BJ (cell line): ENCODE measurements at regions of chr17 and their contacts with region 1.

Region 1: DNA sequence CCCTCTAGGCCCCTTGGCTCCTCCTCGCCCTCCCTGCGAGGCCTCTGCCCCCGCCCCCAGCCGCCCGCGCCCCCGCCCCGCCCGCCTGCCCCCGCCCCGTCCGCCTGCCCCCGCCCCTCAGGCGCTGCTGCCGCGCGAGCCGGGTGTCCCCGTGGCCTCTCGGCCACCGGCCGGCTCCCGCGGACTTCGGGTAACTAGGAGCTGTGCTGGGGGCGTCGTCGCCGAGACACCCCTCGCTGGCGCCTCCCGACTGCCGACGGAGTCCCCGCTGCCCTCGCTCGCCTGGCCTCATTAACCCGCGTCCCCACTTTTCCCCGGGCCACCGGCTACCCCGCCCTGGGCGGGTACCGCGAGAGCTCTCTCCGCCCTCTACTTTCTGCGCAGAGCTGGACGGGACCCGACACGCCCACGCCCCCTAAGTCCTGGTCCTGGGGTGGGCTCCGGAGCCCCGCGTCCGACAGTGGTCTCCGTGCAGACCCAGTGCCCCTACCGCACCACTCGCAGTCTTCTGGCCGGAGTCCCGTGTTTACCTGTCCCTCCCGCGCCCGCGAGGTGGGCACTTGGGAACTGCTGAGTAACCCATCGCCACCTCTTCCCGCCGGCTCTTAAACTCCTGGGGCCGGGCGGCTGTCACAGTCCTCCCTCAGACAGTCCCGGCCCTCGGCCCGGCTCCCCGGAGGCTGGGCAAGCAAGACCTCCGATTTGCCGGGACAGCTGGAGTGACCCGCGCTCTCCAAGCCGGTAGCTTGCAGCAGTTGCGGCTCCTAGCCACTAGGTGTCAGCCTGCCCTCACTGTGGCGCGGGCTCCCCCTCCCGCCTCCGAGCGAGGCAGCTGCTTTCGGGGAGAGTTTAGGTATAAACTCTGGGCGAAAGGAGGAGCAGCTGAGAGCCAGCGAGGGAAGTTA is at the start of gene TLCD1:
- DNase-seq: peak; percentile 65
- H3K4me3 ChIP-seq: peak within 1 kb of the TSS; percentile 71
- H3K27me3 ChIP-seq: no peaks in the 10 kb centered on the region
- CTCF ChIP-seq: peak; percentile 99
- polyA plus RNA-seq, gene TLCD1: 9.4 and 9.8 TPM in 2 replicates

Region 2: DNA sequence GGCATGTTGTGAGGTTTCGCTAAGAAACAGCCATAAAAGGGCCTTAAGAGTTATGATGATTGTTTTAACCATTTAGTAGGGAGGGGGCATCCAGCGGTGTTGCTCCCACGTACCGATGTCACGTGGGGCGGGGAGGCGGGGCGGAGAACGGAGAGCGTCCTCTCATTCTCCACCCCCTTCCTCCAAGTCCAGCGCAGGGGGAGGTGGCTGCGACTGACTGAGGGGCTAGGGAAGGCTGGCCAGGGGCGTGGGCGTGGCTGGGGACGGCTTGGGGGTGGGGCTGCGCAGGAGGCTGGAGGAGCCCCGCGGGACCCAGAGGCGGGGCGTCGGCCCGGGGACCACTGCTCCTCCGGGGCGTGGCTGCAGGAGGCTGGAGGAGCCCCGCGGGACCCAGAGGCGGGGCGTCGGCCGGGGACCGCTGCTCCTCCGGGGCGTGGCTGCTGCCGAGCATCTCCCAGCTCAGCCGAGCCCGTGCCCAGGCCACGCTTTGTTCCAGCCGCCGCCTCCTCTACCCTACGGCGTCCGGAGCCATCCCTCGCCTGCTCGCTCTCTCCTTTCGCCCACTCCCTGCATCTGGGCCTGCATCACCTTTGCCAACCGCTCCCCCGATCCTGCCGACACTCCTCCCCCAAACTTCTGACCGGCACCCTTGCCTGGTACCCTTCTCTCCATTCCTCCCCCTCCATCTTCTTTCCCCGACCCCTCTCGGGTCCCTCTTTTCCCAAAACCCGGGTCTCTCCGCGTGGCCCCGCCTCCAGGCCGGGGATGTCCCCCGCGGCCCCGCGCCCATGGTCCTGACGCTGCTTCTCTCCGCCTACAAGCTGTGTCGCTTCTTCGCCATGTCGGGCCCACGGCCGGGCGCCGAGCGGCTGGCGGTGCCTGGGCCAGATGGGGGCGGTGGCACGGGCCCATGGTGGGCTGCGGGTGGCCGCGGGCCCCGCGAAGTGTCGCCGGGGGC is 355.0 kb before region 1 on chr17 and contains the start of gene SARM1:
- CTCF ChIA-PET with region 1: no interaction called
- POLR2A ChIA-PET with region 1: no interaction called
- DNase-seq: peak; percentile 62
- H3K4me3 ChIP-seq: peak within 1 kb of the TSS; percentile 73
- H3K27me3 ChIP-seq: no peaks in the 10 kb centered on the region
- CTCF ChIP-seq: no peak
- polyA plus RNA-seq, gene SARM1: 8.7 and 13.4 TPM in 2 replicates

Region 3: GRCh38 chr17:28750178-28751047 is 23.9 kb after region 1 on chr17:
- CTCF ChIA-PET with region 1: interaction called, 416 read pairs
- POLR2A ChIA-PET with region 1: interaction called, 19 read pairs
- DNase-seq: no peak
- H3K4me3 ChIP-seq: no peak overlapping the region
- H3K27me3 ChIP-seq: no peaks in the 10 kb centered on the region
- CTCF ChIP-seq: peak; percentile 100

Region 4: DNA sequence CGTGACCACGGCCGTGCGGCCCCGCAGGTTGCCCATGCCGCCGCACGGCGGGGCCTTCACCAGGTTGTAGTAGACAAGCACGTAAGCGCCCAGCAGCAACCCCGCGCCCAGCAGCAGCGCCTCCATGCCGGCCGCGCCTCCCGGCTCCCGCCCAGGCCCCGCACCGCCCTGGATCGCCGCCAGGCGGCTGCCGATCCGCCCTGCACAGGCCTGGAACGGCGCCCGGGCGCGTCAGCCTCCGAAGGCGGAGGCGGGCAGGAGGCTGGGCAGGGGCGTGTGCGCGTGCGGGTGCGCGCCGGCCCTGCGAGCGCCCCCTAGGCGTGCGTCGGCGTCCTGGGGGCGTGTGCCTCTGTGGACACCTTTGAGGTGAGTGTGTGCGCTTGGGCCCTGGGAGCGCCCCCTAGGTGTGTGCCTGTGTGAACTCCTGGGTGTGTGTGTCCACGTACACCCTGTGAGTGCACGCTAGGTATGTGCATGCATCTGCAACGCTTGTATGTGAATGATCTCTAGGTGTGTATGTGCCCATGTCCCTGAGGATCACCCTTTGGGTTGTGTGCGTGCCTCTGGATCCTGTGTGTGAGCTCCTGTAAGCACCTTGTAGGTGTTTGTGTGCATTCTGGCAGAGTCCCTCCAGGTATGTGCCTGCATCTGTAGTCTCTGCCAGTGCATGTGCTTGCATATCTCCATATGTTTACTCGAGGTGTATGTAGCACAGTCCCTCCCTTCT is 176.5 kb after region 1 on chr17 and contains the start of gene DHRS13:
- CTCF ChIA-PET with region 1: interaction called, 48 read pairs
- POLR2A ChIA-PET with region 1: interaction called, 5 read pairs
- DNase-seq: peak; percentile 19
- H3K4me3 ChIP-seq: peak within 1 kb of the TSS; percentile 57
- H3K27me3 ChIP-seq: no peaks in the 10 kb centered on the region
- CTCF ChIP-seq: peak; percentile 71
- polyA plus RNA-seq, gene DHRS13: 2.1 and 2.8 TPM in 2 replicates

Region 5: GRCh38 chr17:28946239-28946638 is 219.8 kb after region 1 on chr17:
- CTCF ChIA-PET with region 1: interaction called, 61 read pairs
- POLR2A ChIA-PET with region 1: no interaction called
- DNase-seq: peak; percentile 59
- H3K4me3 ChIP-seq: no peak overlapping the region
- H3K27me3 ChIP-seq: no peaks in the 10 kb centered on the region
- CTCF ChIP-seq: no peak

Region 6: GRCh38 chr17:29111816-29112499 is 385.5 kb after region 1 on chr17:
- CTCF ChIA-PET with region 1: interaction called, 18 read pairs
- POLR2A ChIA-PET with region 1: no interaction called
- DNase-seq: no peak
- H3K4me3 ChIP-seq: no peak overlapping the region
- H3K27me3 ChIP-seq: no peaks in the 10 kb centered on the region
- CTCF ChIP-seq: peak; percentile 99